ENCODE measurements at regions of chr2 and their contacts with region 1.

Region 1: GRCh38 chr2:74919827-74920226 is 38.6 kb upstream of the POLE4 start:
- DNase-seq: peak; percentile 52
- H3K4me3 Mint-ChIP-seq: no peak overlapping the region
- H3K27ac Mint-ChIP-seq: no peak overlapping the region
- H3K4me1 Mint-ChIP-seq: peaks cover 17% of the 10 kb centered on the region
- H3K27me3 Mint-ChIP-seq: peaks cover 21% of the 10 kb centered on the region

Region 2: DNA sequence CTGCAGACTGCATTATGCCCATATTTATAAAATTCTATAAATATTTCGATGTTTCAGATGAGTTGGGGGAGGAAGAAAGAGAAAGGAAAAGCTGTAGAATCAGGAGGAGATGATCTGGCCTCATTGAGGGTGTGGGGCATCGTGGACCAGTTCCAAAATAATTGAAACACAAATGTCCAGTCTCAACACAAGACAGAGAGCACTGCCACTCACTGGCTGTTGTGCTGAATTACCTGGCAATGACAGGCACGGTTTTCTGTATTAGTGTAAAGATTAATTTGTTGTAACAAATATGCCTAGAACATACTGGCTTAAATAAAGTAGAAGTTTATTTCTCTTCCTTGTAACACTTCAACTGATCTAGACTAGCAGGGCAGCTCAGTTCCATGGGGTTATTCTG is 62.8 kb after region 1 on chr2:
- intact Hi-C with region 1: loop called (anchors 5 kb)
- DNase-seq: no peak
- H3K4me3 Mint-ChIP-seq: no peak overlapping the region
- H3K27ac Mint-ChIP-seq: no peak overlapping the region
- H3K4me1 Mint-ChIP-seq: no peaks in the 10 kb centered on the region
- H3K27me3 Mint-ChIP-seq: no peaks in the 10 kb centered on the region

Region 3: GRCh38 chr2:75064691-75065396 is 145.0 kb after region 1 on chr2:
- intact Hi-C with region 1: loop called (anchors 5 kb)
- DNase-seq: peak; percentile 8
- H3K4me3 Mint-ChIP-seq: no peak overlapping the region
- H3K27ac Mint-ChIP-seq: no peak overlapping the region
- H3K4me1 Mint-ChIP-seq: no peaks in the 10 kb centered on the region
- H3K27me3 Mint-ChIP-seq: peaks cover 2% of the 10 kb centered on the region

Region 4: DNA sequence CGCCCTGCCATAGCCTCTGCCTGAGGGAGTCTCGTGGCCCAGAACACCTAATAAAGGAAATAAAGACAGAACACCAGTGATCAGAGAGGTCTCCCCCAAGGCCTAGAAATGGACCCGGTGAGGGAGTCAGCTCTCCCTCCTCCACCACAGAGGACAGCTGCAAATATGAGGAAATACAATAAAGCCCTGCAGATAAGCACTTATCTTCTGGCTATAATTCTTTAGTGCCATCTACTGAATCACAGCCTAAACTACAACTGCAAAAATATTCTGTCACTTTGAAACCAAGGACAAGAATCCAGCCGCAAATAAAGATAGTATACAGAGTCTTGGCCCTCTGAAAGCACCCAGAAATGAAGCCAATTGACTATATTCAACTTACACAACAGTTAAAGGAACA is 321.9 kb after region 1 on chr2:
- intact Hi-C with region 1: loop called (anchors 5 kb)
- DNase-seq: no peak
- H3K4me3 Mint-ChIP-seq: no peak overlapping the region
- H3K27ac Mint-ChIP-seq: no peak overlapping the region
- H3K4me1 Mint-ChIP-seq: no peaks in the 10 kb centered on the region
- H3K27me3 Mint-ChIP-seq: peaks cover 1% of the 10 kb centered on the region

Region 5: GRCh38 chr2:75403991-75404428 is 484.2 kb after region 1 on chr2:
- intact Hi-C with region 1: loop called (anchors 1 kb)
- DNase-seq: no peak
- H3K4me3 Mint-ChIP-seq: no peak overlapping the region
- H3K27ac Mint-ChIP-seq: no peak overlapping the region
- H3K4me1 Mint-ChIP-seq: no peaks in the 10 kb centered on the region
- H3K27me3 Mint-ChIP-seq: peaks cover 6% of the 10 kb centered on the region

Region 6: DNA sequence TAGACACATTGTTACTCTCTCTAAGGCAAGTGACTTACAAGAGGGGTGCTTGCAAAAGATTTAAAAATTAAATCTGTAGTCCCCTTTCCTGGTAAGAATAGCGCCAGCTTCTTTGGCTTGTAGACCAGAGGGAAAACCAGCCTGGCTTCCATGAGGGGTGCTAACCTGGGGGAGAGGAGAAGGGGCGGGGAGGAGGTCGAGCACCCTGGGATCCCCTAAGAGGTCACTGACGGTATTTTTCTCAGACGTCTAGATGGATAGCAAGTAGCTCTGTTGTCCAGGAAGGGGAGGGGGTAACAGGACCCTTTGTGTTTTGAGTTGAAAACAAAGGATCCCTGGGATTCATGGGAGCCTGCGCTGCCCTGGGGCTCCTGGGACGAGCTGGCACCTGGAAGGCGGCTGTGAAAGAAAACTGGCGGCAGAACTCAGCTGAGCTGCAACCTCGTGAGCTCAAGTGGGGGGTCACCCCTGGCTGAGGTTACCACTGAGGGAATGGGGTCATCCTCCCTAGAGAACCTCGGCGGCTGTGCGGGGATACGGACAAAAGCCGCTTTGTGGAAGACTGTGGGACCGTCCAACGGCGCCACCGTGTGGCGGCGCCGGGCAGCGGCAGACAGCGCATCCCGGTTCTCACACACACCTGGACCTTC is 689.0 kb after region 1 on chr2:
- intact Hi-C with region 1: loop called (anchors 1 kb)
- DNase-seq: peak; percentile 27
- H3K4me3 Mint-ChIP-seq: no peak overlapping the region
- H3K27ac Mint-ChIP-seq: no peak overlapping the region
- H3K4me1 Mint-ChIP-seq: no peaks in the 10 kb centered on the region
- H3K27me3 Mint-ChIP-seq: peaks cover 14% of the 10 kb centered on the region

Measured in activated T-helper 1 cell treated with anti-CD3 and anti-CD28 coated beads, Interleukin-12 subunit alpha, Interleukin-12 subunit beta, Interleukin-2, Interleukin-4 antibody, amounts not matched to agents 30 ng/mL and 10 ng/mL and 1 ng/mL, durations not matched to agents 14 hours and 24 hours and 36 hours (primary cell).